ENCODE measurements at regions of chr10 and their contacts with region 1.

Region 1: GRCh38 chr10:23535381-23535780 is 96.5 kb downstream of the OTUD1 start:
- DNase-seq: no peak
- ATAC-seq: no peak
- H3K4me3 ChIP-seq: no peak overlapping the region
- H3K4me3 Mint-ChIP-seq: no peak overlapping the region
- H3K27ac ChIP-seq: no peak overlapping the region
- H3K27ac Mint-ChIP-seq: peak overlapping the region; percentile 20
- H3K4me1 ChIP-seq: peaks cover 25% of the 10 kb centered on the region
- H3K4me1 Mint-ChIP-seq: peaks cover 46% of the 10 kb centered on the region
- H3K27me3 ChIP-seq: no peaks in the 10 kb centered on the region
- H3K27me3 Mint-ChIP-seq: no peaks in the 10 kb centered on the region
- CTCF ChIP-seq: no peak

Region 2: DNA sequence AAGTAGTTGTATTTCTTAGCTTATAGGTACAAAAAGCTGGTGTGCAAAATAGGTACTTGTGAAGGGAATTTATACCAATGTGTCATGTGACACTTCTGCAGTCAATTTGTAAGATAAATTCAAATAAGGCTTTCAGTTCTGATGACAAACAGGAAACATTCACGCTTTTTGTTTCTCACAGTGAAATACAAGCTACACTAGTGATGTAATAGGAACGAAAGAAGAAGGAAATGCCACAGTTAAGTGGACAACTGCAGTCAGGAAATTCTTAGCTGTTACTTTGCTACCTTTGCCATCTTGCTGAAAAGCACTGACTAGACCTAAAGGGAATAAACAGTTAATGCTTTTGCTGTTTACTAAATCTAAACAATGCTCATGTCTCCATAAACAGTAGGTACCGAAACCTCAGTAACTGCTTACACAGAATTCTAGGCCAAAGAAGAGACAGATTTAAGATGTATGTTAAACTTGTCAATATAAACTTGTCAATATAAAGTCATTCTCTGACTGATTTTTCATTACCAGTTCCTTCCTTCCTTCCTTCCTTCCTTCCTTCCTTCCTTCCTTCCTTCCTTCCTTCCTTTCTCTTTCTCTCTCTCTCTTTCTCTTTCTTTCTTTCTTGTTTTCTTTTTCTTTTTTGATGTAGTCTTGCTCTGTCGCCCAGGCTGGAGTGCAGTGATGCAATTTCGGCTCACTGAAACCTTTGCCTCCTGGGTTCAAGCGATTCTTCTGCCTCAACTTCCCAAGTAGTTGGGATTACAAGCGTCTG is 86.4 kb before region 1 on chr10:
- CTCF ChIA-PET with region 1: interaction called, 3 read pairs
- POLR2A ChIA-PET with region 1: no interaction called
- intact Hi-C with region 1: loop called in 1 of 2 experiments (anchors 5 kb)
- DNase-seq: peak in 2 of 9 experiments; percentile 16 to 51
- ATAC-seq: peak; percentile 76
- H3K4me3 ChIP-seq: no peak overlapping the region
- H3K4me3 Mint-ChIP-seq: no peak overlapping the region
- H3K27ac ChIP-seq: peak overlapping the region; percentile 27 to 29
- H3K27ac Mint-ChIP-seq: peak overlapping the region; percentile 88
- H3K4me1 ChIP-seq: peaks cover 13% of the 10 kb centered on the region
- H3K4me1 Mint-ChIP-seq: peaks cover 34% of the 10 kb centered on the region
- H3K27me3 ChIP-seq: no peaks in the 10 kb centered on the region
- H3K27me3 Mint-ChIP-seq: no peaks in the 10 kb centered on the region
- CTCF ChIP-seq: no peak

Region 3: GRCh38 chr10:24034571-24034970 is 499.2 kb after region 1 on chr10:
- CTCF ChIA-PET with region 1: no interaction called
- POLR2A ChIA-PET with region 1: no interaction called
- intact Hi-C with region 1: no loop called
- DNase-seq: no peak
- ATAC-seq: no peak
- H3K4me3 ChIP-seq: no peak overlapping the region
- H3K4me3 Mint-ChIP-seq: no peak overlapping the region
- H3K27ac ChIP-seq: no peak overlapping the region
- H3K27ac Mint-ChIP-seq: no peak overlapping the region
- H3K4me1 ChIP-seq: no peaks in the 10 kb centered on the region
- H3K4me1 Mint-ChIP-seq: no peaks in the 10 kb centered on the region
- H3K27me3 ChIP-seq: no peaks in the 10 kb centered on the region
- H3K27me3 Mint-ChIP-seq: peaks cover 4% of the 10 kb centered on the region
- CTCF ChIP-seq: no peak

Region 4: DNA sequence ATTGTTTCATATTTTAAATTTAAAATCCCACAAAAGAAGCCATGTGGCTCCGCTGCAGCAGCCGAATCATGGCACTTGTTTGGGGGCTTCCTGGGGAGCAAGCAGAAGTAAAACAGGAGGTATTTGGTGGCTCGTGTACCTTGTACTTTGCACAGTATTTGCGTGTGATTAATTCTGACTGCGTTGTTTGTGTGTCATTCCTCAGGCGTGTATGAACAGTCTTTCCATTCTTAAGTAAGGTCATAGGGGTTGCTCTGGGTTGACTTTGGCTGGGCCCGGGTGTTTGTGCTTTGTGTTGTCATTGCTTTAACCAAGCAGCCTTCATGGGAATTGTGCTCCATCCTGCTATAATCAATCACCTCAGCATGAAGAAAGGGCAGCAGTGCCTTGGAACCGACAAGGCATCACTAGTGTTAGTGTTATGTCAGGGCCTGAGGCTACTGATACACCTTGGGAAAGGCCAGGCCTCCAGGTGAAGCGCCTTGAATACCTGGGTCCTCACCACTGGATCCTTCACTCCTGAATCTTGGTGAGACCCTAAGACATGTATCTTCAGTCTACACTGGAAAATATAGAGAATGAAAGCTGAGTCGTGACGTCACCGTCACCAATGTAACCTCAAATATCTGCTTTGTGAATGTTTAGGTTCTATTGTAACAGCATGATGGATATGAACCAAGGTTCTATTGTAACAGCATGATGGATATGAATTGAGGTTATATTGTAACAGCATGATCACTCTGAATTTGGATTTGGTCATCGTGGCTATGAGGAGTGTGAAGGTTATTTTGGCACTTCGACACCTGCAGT is 1006.1 kb after region 1 on chr10:
- CTCF ChIA-PET with region 1: no interaction called
- POLR2A ChIA-PET with region 1: no interaction called
- intact Hi-C with region 1: no loop called
- DNase-seq: no peak
- ATAC-seq: no peak
- H3K4me3 ChIP-seq: no peak overlapping the region
- H3K4me3 Mint-ChIP-seq: no peak overlapping the region
- H3K27ac ChIP-seq: no peak overlapping the region
- H3K27ac Mint-ChIP-seq: no peak overlapping the region
- H3K4me1 ChIP-seq: no peaks in the 10 kb centered on the region
- H3K4me1 Mint-ChIP-seq: no peaks in the 10 kb centered on the region
- H3K27me3 ChIP-seq: no peaks in the 10 kb centered on the region
- H3K27me3 Mint-ChIP-seq: peaks cover 2% of the 10 kb centered on the region
- CTCF ChIP-seq: no peak